Activated CD8-positive, alpha-beta T cell treated with anti-CD3 and anti-CD28 coated beads for 36 hours (primary cell): ENCODE measurements at regions of chr16 and their contacts with region 1.

Region 1: DNA sequence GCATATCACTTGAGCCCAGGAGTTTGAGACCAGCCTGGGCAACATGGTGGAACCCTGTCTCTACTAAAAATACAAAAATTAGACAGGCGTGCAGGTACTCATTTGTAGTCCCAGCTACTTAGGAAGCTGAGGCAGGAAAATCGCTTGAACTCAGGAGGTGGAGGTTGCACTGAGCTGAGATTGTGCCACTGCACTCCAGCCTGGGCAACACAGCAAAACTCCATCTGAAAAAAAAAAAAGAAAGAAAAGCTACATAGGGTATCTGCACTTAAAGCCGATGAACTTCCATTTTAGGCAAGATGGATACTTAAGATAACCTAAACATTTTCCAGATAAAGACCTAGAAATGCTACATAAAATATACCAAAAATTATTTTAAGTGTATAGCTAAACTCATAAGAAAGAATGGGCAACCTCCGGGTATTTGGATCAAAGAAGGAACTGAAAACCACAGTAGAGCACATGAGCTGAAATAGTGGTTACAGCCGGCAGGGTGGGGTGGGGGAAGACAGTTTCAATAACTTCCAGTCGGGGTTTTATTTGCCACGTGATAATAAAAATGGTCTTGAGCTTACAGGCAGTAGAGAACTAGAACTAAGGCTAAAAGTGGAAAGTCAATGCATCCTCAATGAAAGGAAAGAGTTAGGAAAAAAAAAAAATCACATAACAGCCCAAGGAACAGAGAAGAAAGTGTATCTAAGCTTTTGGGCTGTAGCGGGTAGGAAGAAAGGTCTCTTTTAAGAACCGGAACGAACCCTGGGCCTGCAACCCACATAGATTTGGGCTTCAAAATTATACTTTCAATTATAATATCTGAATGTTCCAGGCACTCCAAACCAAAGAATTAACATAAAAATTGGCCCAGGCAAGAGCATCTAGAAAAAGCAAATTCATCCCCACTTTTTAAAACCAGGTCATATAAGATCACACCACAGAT is 53.1 kb downstream of the CFDP1 start:
- DNase-seq: peak; percentile 66
- ATAC-seq: peak; percentile 71
- H3K4me3 Mint-ChIP-seq: peak overlapping the region; percentile 6
- H3K27ac Mint-ChIP-seq: no peak overlapping the region
- H3K4me1 Mint-ChIP-seq: peaks cover 47% of the 10 kb centered on the region
- H3K27me3 Mint-ChIP-seq: peaks cover 2% of the 10 kb centered on the region
- CTCF ChIP-seq: no peak

Region 2: GRCh38 chr16:75319513-75320411 is 60.4 kb before region 1 on chr16:
- CTCF ChIA-PET with region 1: interaction called, 4 read pairs
- POLR2A ChIA-PET with region 1: no interaction called
- intact Hi-C with region 1: loop called (anchors 5 kb)
- DNase-seq: peak; percentile 33
- ATAC-seq: peak; percentile 65
- H3K4me3 Mint-ChIP-seq: no peak overlapping the region
- H3K27ac Mint-ChIP-seq: no peak overlapping the region
- H3K4me1 Mint-ChIP-seq: peaks cover 35% of the 10 kb centered on the region
- H3K27me3 Mint-ChIP-seq: no peaks in the 10 kb centered on the region
- CTCF ChIP-seq: no peak

Region 3: DNA sequence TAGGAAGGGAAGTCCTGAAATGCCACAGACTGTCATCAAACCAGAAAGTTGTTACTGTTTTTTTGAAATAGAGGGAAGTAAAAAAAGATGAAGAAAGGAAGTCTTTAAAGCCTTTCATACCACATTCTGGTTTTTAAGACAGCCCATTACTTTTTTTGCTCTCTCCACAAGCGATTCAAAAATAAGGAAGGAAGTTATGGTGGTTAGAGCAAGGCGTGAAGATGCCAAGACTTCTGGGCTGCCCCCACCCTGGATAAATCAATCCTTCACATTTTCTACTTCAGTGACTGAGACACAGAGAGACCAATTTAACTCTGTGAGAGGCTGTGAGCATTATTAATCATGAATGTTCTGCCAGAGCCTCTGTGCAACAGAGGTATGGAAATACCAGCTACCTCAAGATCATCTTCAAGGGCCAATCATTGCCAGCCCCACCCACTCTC is 46.4 kb before region 1 on chr16:
- CTCF ChIA-PET with region 1: no interaction called
- POLR2A ChIA-PET with region 1: no interaction called
- intact Hi-C with region 1: no loop called
- DNase-seq: no peak
- ATAC-seq: no peak
- H3K4me3 Mint-ChIP-seq: no peak overlapping the region
- H3K27ac Mint-ChIP-seq: no peak overlapping the region
- H3K4me1 Mint-ChIP-seq: peaks cover 14% of the 10 kb centered on the region
- H3K27me3 Mint-ChIP-seq: no peaks in the 10 kb centered on the region
- CTCF ChIP-seq: no peak